ENCODE measurements at regions of chrX and their contacts with region 1.

Region 1: GRCh38 chrX:136397001-136397400 is 90.7 kb upstream of the BRS3 start:
- DNase-seq: no peak
- ATAC-seq: no peak
- H3K4me3 ChIP-seq: no peak overlapping the region
- H3K27ac ChIP-seq: no peak overlapping the region
- H3K4me1 ChIP-seq: no peaks in the 10 kb centered on the region
- H3K27me3 ChIP-seq: no peaks in the 10 kb centered on the region; the same call in 1 of the 2 replicates
- CTCF ChIP-seq: no peak
- POLR2A ChIP-seq: no peak
- RAD21 ChIP-seq: no peak

Region 2: GRCh38 chrX:136417806-136418205 is 20.8 kb after region 1 on chrX:
- CTCF ChIA-PET with region 1: no interaction called
- POLR2A ChIA-PET with region 1: no interaction called
- dilution Hi-C with region 1: no loop called
- in situ Hi-C with region 1: no loop called
- intact Hi-C with region 1: no loop called
- DNase-seq: no peak
- ATAC-seq: no peak
- H3K4me3 ChIP-seq: no peak overlapping the region
- H3K27ac ChIP-seq: no peak overlapping the region
- H3K4me1 ChIP-seq: no peaks in the 10 kb centered on the region
- H3K27me3 ChIP-seq: no peaks in the 10 kb centered on the region
- CTCF ChIP-seq: no peak
- POLR2A ChIP-seq: no peak
- RAD21 ChIP-seq: no peak

Region 3: DNA sequence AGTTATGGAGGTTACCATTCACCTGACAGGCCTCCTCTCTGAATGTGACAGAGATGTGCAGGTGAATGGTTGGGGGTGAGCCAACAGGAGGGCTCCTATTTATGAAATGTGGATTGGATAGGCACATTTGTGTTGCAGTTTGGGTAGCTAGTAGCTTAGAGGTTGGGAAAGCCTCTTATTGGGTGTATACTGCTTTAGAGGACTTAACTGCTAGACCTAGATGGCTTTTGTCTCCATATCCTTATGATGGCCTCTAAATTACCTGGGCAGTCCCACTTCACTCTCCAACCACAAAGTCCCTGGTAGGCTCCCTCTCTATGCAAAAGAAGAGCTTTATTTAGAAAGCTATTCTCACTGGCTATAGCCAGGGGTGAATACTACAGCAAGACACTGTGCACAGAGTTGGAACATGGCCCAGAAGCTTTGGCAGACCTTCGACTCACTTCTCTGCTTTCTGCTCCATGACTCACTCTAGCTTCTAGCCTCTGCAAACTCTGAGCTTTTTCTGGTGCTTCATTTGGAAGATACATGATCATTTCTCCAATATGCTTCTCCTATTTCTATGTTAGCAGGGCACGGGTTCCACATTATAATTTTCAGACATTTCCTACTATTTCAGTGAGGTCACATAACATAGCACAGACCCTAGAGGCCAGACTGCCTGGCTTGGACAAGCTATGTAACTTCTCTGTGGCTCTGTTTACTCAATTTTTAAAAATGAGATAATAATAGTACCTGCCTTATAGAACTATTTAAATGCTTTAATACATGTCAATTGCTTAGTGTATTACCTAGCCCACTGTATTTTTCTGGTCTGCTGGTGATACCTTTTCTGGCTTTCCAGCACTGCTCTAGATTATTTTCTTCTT is 129.0 kb after region 1 on chrX:
- CTCF ChIA-PET with region 1: no interaction called
- POLR2A ChIA-PET with region 1: no interaction called
- dilution Hi-C with region 1: no loop called
- in situ Hi-C with region 1: no loop called
- intact Hi-C with region 1: no loop called
- DNase-seq: peak; percentile 85
- ATAC-seq: peak; percentile 91
- H3K4me3 ChIP-seq: no peak overlapping the region
- H3K27ac ChIP-seq: no peak overlapping the region
- H3K4me1 ChIP-seq: no peaks in the 10 kb centered on the region
- H3K27me3 ChIP-seq: no peaks in the 10 kb centered on the region; the same call in 1 of the 2 replicates
- CTCF ChIP-seq: no peak
- POLR2A ChIP-seq: no peak
- RAD21 ChIP-seq: no peak

Region 4: GRCh38 chrX:136577552-136577951 is 180.6 kb after region 1 on chrX:
- CTCF ChIA-PET with region 1: no interaction called
- POLR2A ChIA-PET with region 1: no interaction called
- dilution Hi-C with region 1: no loop called
- in situ Hi-C with region 1: no loop called
- intact Hi-C with region 1: loop called (anchors 10 kb)
- DNase-seq: peak; percentile 32
- ATAC-seq: peak; percentile 96
- H3K4me3 ChIP-seq: no peak overlapping the region
- H3K27ac ChIP-seq: no peak overlapping the region
- H3K4me1 ChIP-seq: no peaks in the 10 kb centered on the region
- H3K27me3 ChIP-seq: peaks cover 4% of the 10 kb centered on the region
- CTCF ChIP-seq: peak; percentile 61
- POLR2A ChIP-seq: no peak
- RAD21 ChIP-seq: peak; percentile 53

Measured in IMR-90 (cell line).